ENCODE measurements at regions of chr1 and their contacts with region 1.

Region 1: GRCh38 chr1:116769561-116769977 is 15.3 kb downstream of the CD2 start:
- DNase-seq: peak; percentile 77
- H3K4me3 Mint-ChIP-seq: peak overlapping the region; percentile 84
- H3K27ac Mint-ChIP-seq: peak overlapping the region; percentile 100
- H3K4me1 Mint-ChIP-seq: peaks cover 90% of the 10 kb centered on the region
- H3K27me3 Mint-ChIP-seq: peaks cover under 1% of the 10 kb centered on the region

Region 2: GRCh38 chr1:116806245-116806644 is 36.7 kb after region 1 on chr1:
- intact Hi-C with region 1: loop called (anchors 1 kb)
- DNase-seq: peak; percentile 40
- H3K4me3 Mint-ChIP-seq: peak overlapping the region; percentile 71
- H3K27ac Mint-ChIP-seq: peak overlapping the region; percentile 94
- H3K4me1 Mint-ChIP-seq: peaks cover 93% of the 10 kb centered on the region
- H3K27me3 Mint-ChIP-seq: no peaks in the 10 kb centered on the region

Region 3: GRCh38 chr1:116847688-116848531 is 78.3 kb after region 1 on chr1:
- intact Hi-C with region 1: loop called (anchors 1 kb)
- DNase-seq: no peak
- H3K4me3 Mint-ChIP-seq: no peak overlapping the region
- H3K27ac Mint-ChIP-seq: peak overlapping the region; percentile 38
- H3K4me1 Mint-ChIP-seq: peaks cover 34% of the 10 kb centered on the region
- H3K27me3 Mint-ChIP-seq: no peaks in the 10 kb centered on the region

Region 4: DNA sequence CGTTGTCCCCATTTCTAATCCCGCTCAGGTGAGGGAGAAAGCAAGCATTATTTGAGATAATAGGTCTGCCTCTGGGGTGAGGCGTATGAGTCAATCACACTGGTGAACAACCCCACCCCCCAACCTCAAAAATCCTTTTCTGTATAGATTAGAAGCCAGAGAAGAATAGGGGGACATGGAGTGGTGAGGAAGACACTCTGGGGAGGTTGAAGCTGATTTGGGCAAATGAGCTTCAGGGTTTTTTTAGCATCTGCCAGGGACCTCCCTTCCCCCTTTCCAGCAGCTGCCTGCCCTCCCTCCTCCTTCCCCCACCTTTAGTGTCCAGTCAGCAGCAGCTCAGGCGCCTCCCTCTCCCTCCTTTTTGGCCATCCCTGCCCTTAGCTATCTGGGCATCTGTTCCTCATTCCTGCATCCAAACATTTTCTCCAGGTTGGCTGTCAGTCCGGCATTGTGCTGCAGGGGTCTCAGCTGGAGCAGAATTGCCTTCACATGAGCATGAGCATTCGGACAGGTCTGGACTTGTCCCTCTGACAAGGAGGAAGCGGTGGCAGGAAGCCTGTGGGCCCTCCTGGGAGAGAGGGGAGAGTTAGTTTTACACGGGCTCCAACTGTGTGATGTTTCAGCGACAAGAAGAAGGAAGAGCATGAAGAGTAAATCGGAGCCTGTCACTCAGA is 109.4 kb after region 1 on chr1:
- intact Hi-C with region 1: loop called (anchors 1 kb)
- DNase-seq: no peak
- H3K4me3 Mint-ChIP-seq: no peak overlapping the region
- H3K27ac Mint-ChIP-seq: no peak overlapping the region
- H3K4me1 Mint-ChIP-seq: peaks cover 21% of the 10 kb centered on the region
- H3K27me3 Mint-ChIP-seq: no peaks in the 10 kb centered on the region

Measured in activated T-helper 1 cell treated with anti-CD3 and anti-CD28 coated beads, Interleukin-12 subunit alpha, Interleukin-12 subunit beta, Interleukin-2, Interleukin-4 antibody, amounts not matched to agents 30 ng/mL and 10 ng/mL and 1 ng/mL, durations not matched to agents 14 hours and 24 hours and 36 hours (primary cell).